Mammary epithelial cell (primary cell): ENCODE measurements at regions of chr16 and their contacts with region 1.

Region 1: DNA sequence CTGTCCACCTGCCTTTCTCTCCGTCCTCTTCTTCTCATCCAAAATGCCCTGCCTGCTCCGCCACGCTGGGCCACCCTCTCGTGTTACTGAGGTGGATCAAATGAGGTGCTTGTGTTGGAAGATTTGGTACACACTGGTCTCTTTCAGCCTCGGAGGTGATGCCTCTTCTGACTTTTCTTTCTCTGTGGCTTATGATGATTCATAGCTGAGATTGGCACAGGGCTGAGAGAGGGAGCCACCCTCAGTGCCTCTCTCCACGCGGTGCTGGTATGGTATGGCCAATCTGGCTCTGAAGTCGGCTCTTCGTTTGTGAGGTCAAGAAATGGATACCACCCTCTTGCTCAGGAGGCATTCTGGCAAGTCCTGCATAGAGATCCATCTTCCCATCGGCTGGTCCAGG is 82.4 kb downstream of the PLCG2 start:
- DNase-seq: peak; percentile 75
- H3K4me3 ChIP-seq: peak overlapping the region in 1 of 3 experiments; percentile 8
- H3K27ac ChIP-seq: no peak overlapping the region
- H3K4me1 ChIP-seq: peaks cover 14% of the 10 kb centered on the region
- H3K27me3 ChIP-seq: no peaks in the 10 kb centered on the region
- CTCF ChIP-seq: no peak

Region 2: GRCh38 chr16:81786321-81786720 is 75.2 kb before region 1 on chr16:
- CTCF ChIA-PET with region 1: no interaction called
- dilution Hi-C with region 1: no loop called
- in situ Hi-C with region 1: no loop called
- intact Hi-C with region 1: loop called (anchors 2 kb)
- DNase-seq: peak; percentile 84
- H3K4me3 ChIP-seq: no peak overlapping the region
- H3K27ac ChIP-seq: no peak overlapping the region
- H3K4me1 ChIP-seq: no peaks in the 10 kb centered on the region
- H3K27me3 ChIP-seq: no peaks in the 10 kb centered on the region
- CTCF ChIP-seq: no peak